ENCODE measurements at regions of chr20 and their contacts with region 1.

Region 1: GRCh38 chr20:51595058-51595532 is 52.6 kb upstream of the NFATC2 start:
- DNase-seq: peak; percentile 92
- ATAC-seq: peak; percentile 99

Region 2: DNA sequence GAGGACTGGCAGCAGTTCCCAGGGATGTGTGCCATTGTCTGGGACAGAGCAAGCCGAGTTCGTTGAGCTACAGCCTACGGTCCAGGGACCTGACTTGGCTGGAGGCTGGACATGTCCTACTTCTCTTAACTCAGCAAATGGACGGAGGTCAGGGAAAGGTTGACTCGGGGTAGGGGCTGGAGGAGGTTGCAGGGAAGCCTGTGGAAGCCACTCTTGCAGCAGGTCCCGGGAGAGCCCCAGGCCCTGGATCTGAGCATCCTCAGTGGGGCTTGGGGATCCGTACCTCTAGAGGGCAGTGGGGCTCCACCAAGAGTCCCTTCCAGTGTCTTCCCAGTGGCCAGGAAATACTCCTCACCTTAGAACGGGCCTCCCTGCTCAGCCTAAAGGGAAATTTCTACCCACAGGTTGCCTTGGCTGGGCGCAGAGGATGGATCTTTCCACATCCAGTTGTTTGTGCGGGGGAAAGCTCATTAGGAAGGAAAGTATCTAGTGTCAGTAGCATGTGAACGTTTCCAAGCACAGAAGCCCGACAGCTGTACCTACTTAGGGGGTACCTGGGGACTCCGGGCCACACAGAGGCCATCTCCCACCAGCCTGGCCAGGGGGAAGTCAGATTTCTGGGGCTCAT is 222.8 kb before region 1 on chr20:
- intact Hi-C with region 1: loop called (anchors 5 kb)
- DNase-seq: peak; percentile 71
- ATAC-seq: peak; percentile 95

Region 3: GRCh38 chr20:51789434-51789833 is 194.3 kb after region 1 on chr20:
- intact Hi-C with region 1: no loop called
- DNase-seq: no peak
- ATAC-seq: no peak

Measured in Right ventricle myocardium superior (tissue), 1 donor.